ENCODE measurements at regions of chr11 and their contacts with region 1.

Region 1: DNA sequence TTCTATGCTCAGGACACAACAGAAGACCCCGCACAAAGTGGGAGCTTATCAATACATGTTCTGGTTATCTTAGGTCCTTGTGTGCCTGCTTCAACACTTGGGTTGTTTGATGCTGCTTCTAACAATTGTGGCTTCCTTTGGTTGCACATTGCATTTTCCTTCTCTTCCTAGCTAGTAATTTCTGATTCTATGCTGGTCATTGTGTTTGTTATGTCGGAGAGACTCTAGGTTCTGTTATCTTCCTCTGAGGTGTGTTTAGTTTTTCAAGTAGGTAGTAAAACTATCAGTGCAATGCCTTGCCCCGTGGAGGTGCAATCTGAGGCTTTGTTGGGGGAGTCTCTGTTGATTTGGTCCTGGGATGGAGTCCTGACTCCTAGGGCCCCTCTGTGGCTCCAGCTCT is 414.2 kb downstream of the SHANK2 start:
- DNase-seq: no peak

Region 2: DNA sequence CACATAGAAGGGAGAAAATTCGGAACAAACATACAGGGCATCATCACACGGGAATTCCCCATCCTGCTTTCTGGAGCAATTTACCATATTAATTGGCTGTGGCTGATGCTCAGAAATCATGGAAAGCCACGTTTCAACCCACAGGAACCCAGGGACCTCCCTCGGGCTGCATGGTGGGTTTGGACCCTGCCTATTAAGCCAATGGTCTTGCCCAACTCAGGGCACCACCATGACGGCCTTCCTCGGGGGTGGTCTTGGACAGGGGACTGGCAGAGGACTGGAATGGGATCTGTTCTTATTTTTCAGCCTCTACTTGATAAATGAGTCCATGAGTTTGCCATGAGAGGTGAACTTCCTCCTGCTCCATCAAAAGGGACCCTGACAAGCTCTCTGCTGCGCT is 40.2 kb after region 1 on chr11:
- intact Hi-C with region 1: loop called in 1 of 2 experiments (anchors 1 kb)
- DNase-seq: no peak

Measured in posterior vena cava (tissue), 2 donors.